CD14-positive monocyte (primary cell): ENCODE measurements at regions of chr5 and their contacts with region 1.

Region 1: DNA sequence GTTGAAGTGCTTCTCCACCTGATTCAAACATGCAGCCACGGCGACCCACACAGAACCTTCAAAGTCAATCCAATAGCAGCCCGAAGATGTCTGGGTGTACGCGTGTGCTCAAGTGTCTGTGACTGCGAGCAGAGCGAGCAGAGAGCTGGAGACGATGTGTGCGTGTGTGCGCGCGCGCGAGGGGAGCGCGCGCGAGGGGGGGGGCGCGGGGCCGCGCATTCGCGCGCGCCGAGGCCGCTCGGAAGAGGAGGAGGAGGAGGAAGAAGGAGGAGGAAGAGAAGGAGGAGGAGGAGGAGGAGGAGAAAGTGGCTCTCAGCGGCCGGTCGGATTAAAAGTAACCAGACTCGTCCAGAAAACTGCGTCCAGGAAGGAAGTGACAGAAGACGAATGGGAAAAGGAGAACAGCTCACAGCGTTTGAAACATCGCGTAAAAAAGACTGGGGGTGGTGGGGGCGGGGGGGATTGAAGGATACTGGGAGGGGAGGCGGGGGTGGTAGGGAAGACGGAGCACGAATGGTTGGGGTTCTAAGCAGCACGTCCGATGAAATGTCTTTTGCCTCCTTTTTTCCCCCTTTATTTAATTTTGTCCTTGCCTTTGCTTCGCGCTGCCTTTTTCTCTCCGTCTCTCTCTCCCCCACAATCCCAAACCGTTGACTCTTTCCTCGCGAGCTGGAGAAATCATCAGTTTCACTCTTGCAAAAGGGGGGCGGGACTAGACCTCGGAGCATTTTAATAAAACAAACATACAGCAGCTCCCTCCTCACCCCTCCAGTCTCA is at the start of gene MEF2C:
- DNase-seq: peak; percentile 78 to 84 (median 83)
- H3K4me3 ChIP-seq: peak within 1 kb of the TSS; percentile 94 to 96 (median 94)
- H3K4me3 Mint-ChIP-seq: peak within 1 kb of the TSS; percentile 83 to 100
- H3K27ac ChIP-seq: peak within 1 kb of the TSS; percentile 84 to 86
- H3K27ac Mint-ChIP-seq: peak within 1 kb of the TSS; percentile 95 to 100 (median 98)
- H3K4me1 ChIP-seq: peaks cover 27 to 61% of the 10 kb centered on the region in 2 donors
- H3K4me1 Mint-ChIP-seq: peaks cover 48% of the 10 kb centered on the region
- H3K27me3 ChIP-seq: no peaks in the 10 kb centered on the region
- H3K27me3 Mint-ChIP-seq: peaks cover 0 to 4% (median 0%) of the 10 kb centered on the region in 3 donors
- CTCF ChIP-seq: no peak
- polyA plus RNA-seq, gene MEF2C: 32.0 to 89.3 (median 88.3) TPM

Region 2: DNA sequence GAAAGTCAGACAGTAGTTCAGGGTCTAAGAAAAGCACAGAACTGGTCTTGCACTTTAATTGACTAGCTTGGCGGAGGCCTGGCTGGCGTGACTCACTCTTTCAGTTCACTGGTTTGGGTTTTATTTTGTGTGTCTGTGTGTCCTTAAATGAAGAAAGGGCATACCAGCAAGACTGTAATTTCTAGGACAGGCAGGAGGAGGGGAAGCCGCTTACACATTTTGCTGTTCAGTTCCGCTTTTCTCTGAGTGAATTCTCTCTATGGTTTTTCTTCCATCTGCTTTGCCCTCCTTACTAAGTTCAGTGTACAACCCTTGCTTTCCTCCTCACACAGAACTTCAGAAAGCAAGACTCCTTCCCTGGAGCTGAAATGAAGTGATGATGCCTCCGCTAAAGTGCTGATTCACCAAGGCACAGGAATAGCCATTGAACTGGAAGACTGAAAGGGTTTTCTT is 151.0 kb before region 1 on chr5:
- intact Hi-C with region 1: loop called in 1 of 2 experiments (anchors 10 kb)
- DNase-seq: peak; percentile 71 to 82 (median 78)
- H3K4me3 ChIP-seq: peak overlapping the region in 1 of 3 experiments; percentile 19
- H3K4me3 Mint-ChIP-seq: peak overlapping the region; percentile 51 to 69
- H3K27ac ChIP-seq: peak overlapping the region in 1 of 2 donors; percentile 73
- H3K27ac Mint-ChIP-seq: peak overlapping the region; percentile 80 to 94 (median 90)
- H3K4me1 ChIP-seq: peaks cover 29 to 38% of the 10 kb centered on the region in 2 donors
- H3K4me1 Mint-ChIP-seq: peaks cover 35% of the 10 kb centered on the region
- H3K27me3 ChIP-seq: no peaks in the 10 kb centered on the region
- H3K27me3 Mint-ChIP-seq: no peaks in the 10 kb centered on the region
- CTCF ChIP-seq: no peak

Region 3: GRCh38 chr5:88785391-88786219 is 97.6 kb before region 1 on chr5:
- intact Hi-C with region 1: loop called in 1 of 2 experiments (anchors 10 kb)
- DNase-seq: peak; percentile 54 to 85 (median 82)
- H3K4me3 ChIP-seq: no peak overlapping the region
- H3K4me3 Mint-ChIP-seq: peak overlapping the region; percentile 27 to 30
- H3K27ac ChIP-seq: peak overlapping the region in 1 of 2 donors; percentile 68
- H3K27ac Mint-ChIP-seq: peak overlapping the region; percentile 81 to 96 (median 90)
- H3K4me1 ChIP-seq: peaks cover 33 to 35% of the 10 kb centered on the region in 2 donors
- H3K4me1 Mint-ChIP-seq: peaks cover 40% of the 10 kb centered on the region
- H3K27me3 ChIP-seq: no peaks in the 10 kb centered on the region
- H3K27me3 Mint-ChIP-seq: no peaks in the 10 kb centered on the region
- CTCF ChIP-seq: no peak

Region 4: GRCh38 chr5:88813805-88814575 is 69.3 kb before region 1 on chr5:
- intact Hi-C with region 1: no loop called
- DNase-seq: no peak
- H3K4me3 ChIP-seq: no peak overlapping the region
- H3K4me3 Mint-ChIP-seq: no peak overlapping the region
- H3K27ac ChIP-seq: no peak overlapping the region
- H3K27ac Mint-ChIP-seq: peak overlapping the region in 4 of 7 donors; percentile 4 to 70 (median 24)
- H3K4me1 ChIP-seq: peaks cover 23 to 24% of the 10 kb centered on the region in 2 donors
- H3K4me1 Mint-ChIP-seq: peaks cover 24% of the 10 kb centered on the region
- H3K27me3 ChIP-seq: no peaks in the 10 kb centered on the region
- H3K27me3 Mint-ChIP-seq: no peaks in the 10 kb centered on the region
- CTCF ChIP-seq: no peak

Region 5: DNA sequence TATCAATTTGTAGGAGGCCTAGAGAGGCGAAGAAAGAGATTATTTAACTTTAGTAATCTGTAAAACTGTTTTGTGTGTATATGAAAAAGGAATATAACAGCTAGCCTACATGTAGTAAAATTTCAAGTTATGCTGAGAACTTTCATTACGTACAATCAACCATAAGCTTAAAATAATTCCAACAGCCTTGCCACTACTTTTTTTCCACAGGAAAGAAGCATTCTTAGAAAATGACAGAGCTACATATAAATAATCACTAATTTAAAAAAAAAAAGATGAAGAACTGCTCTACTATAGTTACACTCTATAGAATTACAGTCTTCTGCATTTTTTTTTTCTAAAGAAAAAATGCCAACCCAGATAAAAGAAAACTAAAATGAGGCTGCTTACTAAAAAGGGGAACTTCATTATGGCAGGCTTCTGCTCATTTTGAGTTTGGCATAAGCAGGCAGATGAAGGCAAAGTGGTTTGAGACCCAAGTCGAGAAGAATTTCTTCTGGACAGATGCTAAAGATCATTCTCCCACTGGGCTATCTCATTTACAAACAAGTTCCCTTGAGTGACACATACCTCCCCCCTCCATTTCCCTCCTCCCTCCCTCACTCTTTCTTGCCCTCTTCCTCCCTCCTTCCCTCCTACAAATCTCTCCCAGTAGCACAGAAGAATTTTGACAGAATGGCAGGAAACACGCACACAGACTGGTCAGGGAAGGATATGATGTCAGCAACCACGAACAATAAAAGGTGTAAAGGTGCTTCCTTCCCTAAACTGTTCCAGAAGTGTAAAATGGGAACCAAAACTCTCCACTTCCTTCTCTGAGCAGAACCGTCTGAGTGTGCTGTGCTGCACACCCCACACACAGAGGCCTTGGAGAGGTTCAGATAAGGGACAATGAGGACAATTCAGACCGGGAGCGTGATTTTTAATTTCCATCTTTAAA is 56.3 kb before region 1 on chr5:
- intact Hi-C with region 1: loop called (anchors 5 kb)
- DNase-seq: peak; percentile 76 to 95 (median 94)
- H3K4me3 ChIP-seq: peak overlapping the region; percentile 5 to 65 (median 34)
- H3K4me3 Mint-ChIP-seq: peak overlapping the region; percentile 65 to 72
- H3K27ac ChIP-seq: peak overlapping the region; percentile 66 to 87
- H3K27ac Mint-ChIP-seq: peak overlapping the region; percentile 92 to 99 (median 98)
- H3K4me1 ChIP-seq: peaks cover 66 to 85% of the 10 kb centered on the region in 2 donors
- H3K4me1 Mint-ChIP-seq: peaks cover 76% of the 10 kb centered on the region
- H3K27me3 ChIP-seq: no peaks in the 10 kb centered on the region
- H3K27me3 Mint-ChIP-seq: no peaks in the 10 kb centered on the region
- CTCF ChIP-seq: no peak

Region 6: DNA sequence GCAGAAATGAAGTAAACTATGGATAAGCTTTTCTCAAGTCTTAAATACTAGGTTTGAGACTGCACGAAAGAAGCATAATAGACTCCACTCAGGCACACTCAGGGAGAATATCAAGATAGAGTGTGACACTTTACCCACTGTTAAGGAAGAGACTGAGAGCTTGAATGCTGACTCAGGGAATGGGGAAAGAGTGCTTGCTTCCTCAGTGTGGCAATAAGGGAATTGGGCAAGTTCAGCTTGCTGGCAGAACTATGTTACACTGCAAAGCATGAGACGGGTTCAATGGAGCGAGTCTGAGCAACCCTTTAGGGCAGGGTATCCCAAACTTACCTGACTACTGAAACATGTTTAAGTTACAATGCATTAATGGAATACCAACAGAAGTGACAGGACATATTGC is 237.5 kb after region 1 on chr5:
- intact Hi-C with region 1: no loop called
- DNase-seq: peak; percentile 87 to 92 (median 90)
- H3K4me3 ChIP-seq: peak overlapping the region in 1 of 3 experiments; percentile 49
- H3K4me3 Mint-ChIP-seq: peak overlapping the region in 1 of 2 donors; percentile 73
- H3K27ac ChIP-seq: peak overlapping the region in 1 of 2 donors; percentile 58
- H3K27ac Mint-ChIP-seq: peak overlapping the region in 1 of 7 donors; percentile 73
- H3K4me1 ChIP-seq: peaks cover 25 to 40% of the 10 kb centered on the region in 2 donors
- H3K4me1 Mint-ChIP-seq: peaks cover 13% of the 10 kb centered on the region
- H3K27me3 ChIP-seq: no peaks in the 10 kb centered on the region
- H3K27me3 Mint-ChIP-seq: peaks cover 0 to 2% (median 0%) of the 10 kb centered on the region in 3 donors
- CTCF ChIP-seq: no peak

Region 7: GRCh38 chr5:89396278-89396954 is 513.2 kb after region 1 on chr5:
- intact Hi-C with region 1: loop called in 1 of 2 experiments (anchors 10 kb)
- DNase-seq: peak; percentile 82 to 89 (median 86)
- H3K4me3 ChIP-seq: peak overlapping the region in 2 of 3 experiments; percentile 9 to 62
- H3K4me3 Mint-ChIP-seq: peak overlapping the region; percentile 43 to 83
- H3K27ac ChIP-seq: peak overlapping the region; percentile 18 to 97
- H3K27ac Mint-ChIP-seq: peak overlapping the region; percentile 97 to 99 (median 97)
- H3K4me1 ChIP-seq: peaks cover 37 to 45% of the 10 kb centered on the region in 2 donors
- H3K4me1 Mint-ChIP-seq: peaks cover 45% of the 10 kb centered on the region
- H3K27me3 ChIP-seq: no peaks in the 10 kb centered on the region
- H3K27me3 Mint-ChIP-seq: peaks cover 0 to 1% (median 0%) of the 10 kb centered on the region in 3 donors
- CTCF ChIP-seq: no peak